ENCODE measurements at regions of chr14 and their contacts with region 1.

Region 1: DNA sequence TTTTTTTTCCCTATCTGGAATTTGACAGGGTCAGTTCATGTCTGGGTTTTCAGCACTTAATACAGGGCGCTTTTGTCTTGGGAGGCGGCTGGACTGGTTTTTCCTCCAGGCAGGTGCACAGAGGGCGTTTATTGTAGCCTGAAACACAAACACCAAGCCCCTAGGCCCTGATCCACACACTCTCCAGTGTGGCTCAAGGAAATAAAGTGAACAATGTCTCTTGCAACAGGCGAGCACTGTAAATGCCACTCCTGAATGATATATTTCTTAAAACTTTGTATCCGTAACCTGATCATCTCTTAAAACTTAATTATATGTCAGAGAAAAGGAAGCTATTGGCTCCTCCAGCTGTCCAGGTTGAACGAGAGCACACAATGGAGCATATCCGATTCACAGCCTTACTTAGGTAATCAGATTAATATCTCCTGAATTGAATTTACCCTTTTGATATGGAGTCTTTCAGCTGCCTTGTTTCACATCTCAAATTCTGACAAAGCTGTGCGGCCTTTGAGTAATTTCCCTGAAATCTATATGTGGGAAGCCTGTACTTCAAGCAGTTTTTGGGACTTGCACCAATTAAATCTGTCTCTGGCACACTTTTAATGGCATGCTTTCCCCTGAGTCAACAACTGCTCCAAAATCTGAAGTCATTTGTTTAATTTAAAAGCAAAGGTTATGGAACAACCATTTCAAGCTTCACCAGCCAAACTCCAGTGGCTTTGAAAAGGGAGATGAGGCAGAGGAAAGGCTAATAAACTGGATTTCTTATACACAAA is 485.7 kb downstream of the ZFP36L1 start:
- DNase-seq: peak; percentile 73 to 99
- H3K4me3 ChIP-seq: peak overlapping the region; percentile 22; the same call in 1 of the 2 replicates
- H3K27ac ChIP-seq: peak overlapping the region; percentile 95
- H3K4me1 ChIP-seq: peaks cover 62% of the 10 kb centered on the region
- H3K27me3 ChIP-seq: no peaks in the 10 kb centered on the region
- CTCF ChIP-seq: no peak

Region 2: DNA sequence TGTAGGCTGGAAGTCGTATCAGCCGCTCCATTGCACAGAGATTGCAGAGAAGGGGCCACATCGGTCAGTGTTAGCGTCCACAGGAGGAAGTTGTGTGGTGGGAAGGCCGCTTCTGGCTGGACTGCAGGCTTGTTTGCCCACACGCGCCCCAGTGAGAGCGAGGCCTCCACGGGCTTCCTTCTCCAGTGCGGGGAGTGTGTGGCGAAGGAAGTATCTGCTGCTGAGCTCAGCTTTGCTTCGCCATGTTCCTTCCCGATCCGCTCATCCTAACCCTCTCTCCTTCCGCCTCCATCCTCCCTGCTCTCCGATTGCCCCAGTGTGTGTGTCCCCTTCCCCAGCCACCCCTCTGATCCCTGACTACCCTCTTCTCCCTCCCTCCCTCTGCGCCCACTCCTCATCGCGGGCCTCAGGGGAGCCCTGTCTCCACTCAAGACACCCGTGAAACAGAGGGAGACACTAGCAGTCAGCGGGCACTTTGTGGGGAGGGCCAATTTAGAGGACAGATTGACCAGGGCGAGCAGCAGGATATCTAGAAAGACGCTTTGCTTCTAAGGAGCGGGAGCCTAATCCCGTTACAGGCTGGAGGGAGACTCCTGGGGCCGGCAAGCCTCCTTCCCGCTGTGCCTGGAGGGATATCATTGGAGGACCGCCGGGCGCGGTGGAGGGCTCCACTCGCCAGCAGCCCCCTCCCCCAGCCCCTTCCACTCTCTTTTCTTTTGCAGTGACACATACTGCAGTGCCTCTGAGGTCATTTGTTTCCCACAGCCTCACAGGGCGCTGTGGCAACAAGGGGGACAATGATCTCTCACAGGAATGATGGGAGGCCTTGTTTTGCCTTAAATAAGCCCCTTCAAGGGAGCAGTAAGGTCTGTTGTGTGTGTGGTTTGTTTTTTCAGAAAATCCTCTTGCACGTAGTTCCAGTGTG is 56.9 kb after region 1 on chr14:
- CTCF ChIA-PET with region 1: interaction called, 3 read pairs
- POLR2A ChIA-PET with region 1: interaction called, 10 read pairs
- intact Hi-C with region 1: no loop called
- DNase-seq: no peak
- H3K4me3 ChIP-seq: no peak overlapping the region
- H3K27ac ChIP-seq: no peak overlapping the region
- H3K4me1 ChIP-seq: peaks cover 21% of the 10 kb centered on the region
- H3K27me3 ChIP-seq: no peaks in the 10 kb centered on the region
- CTCF ChIP-seq: no peak

Region 3: DNA sequence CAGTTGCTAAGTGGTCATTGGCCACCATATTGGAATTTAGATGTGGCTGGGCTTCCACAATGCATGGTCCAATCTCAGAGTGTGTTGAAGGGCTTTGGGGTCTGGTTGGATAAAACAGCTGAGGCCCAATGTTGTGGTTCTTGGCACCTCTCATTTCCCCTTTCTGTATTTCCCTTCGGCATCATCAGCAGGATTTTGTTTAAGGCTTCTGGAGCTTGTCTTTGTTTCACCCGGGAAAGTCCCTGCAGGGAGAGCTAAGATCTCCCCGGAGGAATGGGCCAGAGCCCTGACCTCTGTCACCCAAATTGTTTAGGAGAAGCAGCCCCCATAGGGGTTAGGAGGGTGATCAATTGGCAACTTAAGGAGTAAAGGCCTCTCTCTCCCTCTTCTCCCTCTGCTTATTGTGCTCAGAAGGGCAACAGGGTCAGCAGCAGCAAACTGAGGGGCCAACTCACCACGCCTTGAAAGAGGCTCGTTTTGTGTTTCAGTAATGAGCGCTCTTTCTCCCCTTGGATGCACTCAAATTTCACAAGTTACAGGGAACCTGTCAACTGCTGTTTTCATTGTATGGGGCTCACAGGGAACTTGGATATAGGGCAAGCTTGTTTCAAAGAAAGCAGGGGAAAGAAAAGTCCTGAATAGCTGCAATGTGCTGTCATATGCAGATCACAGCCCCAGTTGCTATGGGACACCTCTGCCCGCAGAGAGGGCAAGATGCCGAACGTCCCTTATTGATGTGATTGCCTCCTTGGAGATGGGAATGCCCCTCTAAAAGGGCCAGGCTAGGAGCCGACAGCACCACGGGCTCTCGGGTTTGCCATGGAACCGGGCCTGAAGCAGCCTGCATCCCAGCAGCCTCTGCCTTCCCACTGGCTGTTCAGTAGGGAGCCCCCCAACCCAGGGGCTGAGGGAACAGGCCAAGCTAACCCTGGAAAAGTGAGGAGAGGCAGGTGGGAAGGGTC is 262.0 kb after region 1 on chr14:
- CTCF ChIA-PET with region 1: no interaction called
- POLR2A ChIA-PET with region 1: no interaction called
- intact Hi-C with region 1: no loop called
- DNase-seq: no peak
- H3K4me3 ChIP-seq: no peak overlapping the region
- H3K27ac ChIP-seq: peak overlapping the region; percentile 49
- H3K4me1 ChIP-seq: peaks cover 54% of the 10 kb centered on the region
- H3K27me3 ChIP-seq: no peaks in the 10 kb centered on the region
- CTCF ChIP-seq: no peak

Measured in PC-9 (cell line).